ENCODE measurements at regions of chr12 and their contacts with region 1.

Region 1: DNA sequence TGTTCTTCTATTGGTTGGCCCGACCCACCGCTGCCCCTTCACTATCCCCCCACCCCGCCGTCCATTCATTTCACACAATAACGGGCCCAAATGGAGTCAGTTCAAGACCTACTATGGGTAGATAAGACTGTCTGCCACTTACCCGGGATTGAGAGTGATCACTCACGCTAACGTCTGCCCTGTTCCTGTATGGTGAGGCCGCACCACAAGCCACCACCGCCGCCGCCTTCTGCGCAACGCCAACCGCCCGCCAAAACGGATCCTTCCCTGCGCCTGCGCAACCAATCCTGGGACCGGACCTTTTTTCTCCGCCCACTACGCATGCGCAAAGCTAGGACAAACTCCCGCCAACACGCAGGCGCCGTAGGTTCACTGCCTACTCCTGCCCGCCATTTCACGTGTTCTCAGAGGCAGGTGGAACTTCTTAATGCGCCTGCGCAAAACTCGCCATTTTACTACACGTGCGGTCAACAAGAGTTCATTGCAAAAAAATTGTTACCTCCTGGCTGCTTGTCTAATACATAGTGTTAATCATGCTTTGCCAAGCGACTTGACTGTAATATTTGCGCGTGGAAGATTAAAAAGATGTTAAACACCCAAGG is at the start of gene CBX5:
- DNase-seq: peak; percentile 100
- H3K4me3 Mint-ChIP-seq: no peak within 1 kb of the TSS
- H3K27ac Mint-ChIP-seq: no peak within 1 kb of the TSS
- H3K4me1 Mint-ChIP-seq: peaks cover 53% of the 10 kb centered on the region
- H3K27me3 Mint-ChIP-seq: no peaks in the 10 kb centered on the region
- total RNA-seq, gene CBX5: 169 to 173 TPM

Region 2: GRCh38 chr12:53451661-53452158 is 828.3 kb before region 1 on chr12 and contains the start of gene PCBP2:
- CTCF ChIA-PET with region 1: no interaction called
- intact Hi-C with region 1: loop called (anchors 2 kb)
- DNase-seq: peak; percentile 99
- H3K4me3 Mint-ChIP-seq: peak within 1 kb of the TSS; percentile 99
- H3K27ac Mint-ChIP-seq: peak within 1 kb of the TSS; percentile 99
- H3K4me1 Mint-ChIP-seq: peaks cover 36% of the 10 kb centered on the region
- H3K27me3 Mint-ChIP-seq: no peaks in the 10 kb centered on the region
- total RNA-seq, gene PCBP2: 1,085 to 1,132 TPM

Region 3: GRCh38 chr12:54191550-54192022 is 88.4 kb before region 1 on chr12:
- CTCF ChIA-PET with region 1: no interaction called
- intact Hi-C with region 1: loop called (anchors 1 kb)
- DNase-seq: peak; percentile 84
- H3K4me3 Mint-ChIP-seq: no peak overlapping the region
- H3K27ac Mint-ChIP-seq: no peak overlapping the region
- H3K4me1 Mint-ChIP-seq: peaks cover 16% of the 10 kb centered on the region
- H3K27me3 Mint-ChIP-seq: peaks cover 35% of the 10 kb centered on the region

Region 4: GRCh38 chr12:54300732-54301427 is 20.9 kb after region 1 on chr12 and contains the start of gene NFE2:
- CTCF ChIA-PET with region 1: no interaction called
- intact Hi-C with region 1: no loop called
- DNase-seq: peak; percentile 54
- H3K4me3 Mint-ChIP-seq: peak within 1 kb of the TSS; percentile 26
- H3K27ac Mint-ChIP-seq: no peak within 1 kb of the TSS
- H3K4me1 Mint-ChIP-seq: peaks cover 8% of the 10 kb centered on the region
- H3K27me3 Mint-ChIP-seq: peaks cover 51% of the 10 kb centered on the region
- total RNA-seq, gene NFE2: not detected

Region 5: DNA sequence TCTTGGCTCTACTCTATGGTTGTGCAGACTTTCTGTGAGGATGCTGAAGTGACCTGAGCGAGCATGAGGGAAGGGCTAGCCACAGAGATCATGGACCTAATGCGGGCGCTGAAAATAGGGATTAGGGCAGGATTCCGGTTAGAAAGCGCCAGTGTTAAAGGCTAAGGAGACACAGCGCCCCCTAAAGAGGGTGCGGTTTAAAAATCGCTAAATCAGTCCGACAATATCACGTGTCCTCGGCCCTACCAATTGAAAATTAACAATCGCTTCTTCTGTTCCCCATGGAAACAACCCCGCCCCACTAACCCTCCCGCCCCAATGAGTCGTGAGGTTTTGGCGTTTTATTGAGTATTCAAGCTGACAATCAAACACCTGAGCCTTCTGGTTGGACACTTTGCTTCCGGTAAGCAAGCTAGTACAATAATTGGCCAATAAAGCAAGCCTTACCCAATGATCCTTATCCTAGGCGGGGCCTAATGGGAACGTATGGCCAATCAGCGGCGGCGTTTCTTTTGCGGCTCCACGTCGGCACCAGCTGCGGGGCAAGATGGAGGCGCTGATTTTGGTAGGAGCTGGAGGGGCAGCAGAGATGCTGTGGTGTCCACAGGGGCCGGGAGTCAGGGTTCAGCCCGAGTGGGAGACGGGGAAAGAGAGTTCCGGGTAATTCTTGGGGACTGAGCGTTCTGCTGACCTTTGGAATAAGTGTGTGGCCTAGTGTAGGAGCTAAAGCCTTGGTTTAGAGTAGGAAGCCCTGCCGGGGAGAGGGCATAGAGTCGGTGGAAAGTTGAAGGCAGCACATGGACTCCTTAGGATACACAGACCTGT is 44.9 kb after region 1 on chr12 and contains the start of gene COPZ1:
- CTCF ChIA-PET with region 1: no interaction called
- intact Hi-C with region 1: loop called (anchors 1 kb)
- DNase-seq: peak; percentile 98
- H3K4me3 Mint-ChIP-seq: peak within 1 kb of the TSS; percentile 100
- H3K27ac Mint-ChIP-seq: peak within 1 kb of the TSS; percentile 93
- H3K4me1 Mint-ChIP-seq: peaks cover 44% of the 10 kb centered on the region
- H3K27me3 Mint-ChIP-seq: no peaks in the 10 kb centered on the region
- total RNA-seq, gene COPZ1: 98.0 to 105 TPM

Region 6: GRCh38 chr12:54497883-54498282 is 217.9 kb after region 1 on chr12:
- CTCF ChIA-PET with region 1: no interaction called
- intact Hi-C with region 1: loop called (anchors 1 kb)
- DNase-seq: no peak
- H3K4me3 Mint-ChIP-seq: peak overlapping the region; percentile 95
- H3K27ac Mint-ChIP-seq: peak overlapping the region; percentile 97
- H3K4me1 Mint-ChIP-seq: peaks cover 36% of the 10 kb centered on the region
- H3K27me3 Mint-ChIP-seq: no peaks in the 10 kb centered on the region